ENCODE measurements at regions of chr4 and their contacts with region 1.

Region 1: DNA sequence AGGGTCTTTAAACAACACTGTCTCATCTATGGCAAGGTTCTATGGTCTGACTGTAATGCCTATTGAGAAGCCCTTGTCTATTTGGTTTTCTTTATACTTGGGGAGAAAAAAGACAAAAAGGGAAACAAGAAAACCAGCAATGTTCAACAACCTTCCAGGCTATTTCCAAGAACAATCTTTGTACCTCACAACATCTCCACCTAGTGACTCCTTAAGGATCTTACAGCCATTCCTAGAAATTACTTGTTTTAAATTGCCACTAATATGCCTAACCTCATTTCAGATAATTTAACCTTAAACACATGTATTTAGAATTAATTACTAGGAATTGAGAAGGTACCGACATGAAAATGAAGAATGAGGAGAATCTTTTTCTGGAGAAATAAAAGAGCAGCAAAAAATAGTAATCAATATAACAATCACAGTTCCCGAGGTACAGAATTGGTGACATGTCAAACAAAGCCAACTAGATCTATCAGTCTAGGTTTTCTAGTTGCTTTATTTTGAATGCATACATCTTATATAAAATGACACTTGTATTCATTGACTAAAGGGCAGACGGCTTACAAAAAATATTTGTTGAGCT is 1.6 kb upstream of the RBM46 start:
- DNase-seq: no peak
- H3K4me3 ChIP-seq: no peak overlapping the region
- H3K27ac ChIP-seq: no peak overlapping the region
- H3K4me1 ChIP-seq: peaks cover 0 to 16% (median 14%) of the 10 kb centered on the region in 4 donors
- H3K27me3 ChIP-seq: peaks cover 0 to 12% (median 0%) of the 10 kb centered on the region in 3 donors
- CTCF ChIP-seq: peak in 3 of 4 experiments; percentile 49 to 67 (median 52)
- EP300 ChIP-seq: no peak
- POLR2A ChIP-seq: no peak

Region 2: GRCh38 chr4:154551872-154552686 is 227.4 kb before region 1 on chr4:
- intact Hi-C with region 1: loop called (anchors 2 kb)
- DNase-seq: peak; percentile 88
- H3K4me3 ChIP-seq: no peak overlapping the region
- H3K27ac ChIP-seq: peak overlapping the region; percentile 5 to 88 (median 86)
- H3K4me1 ChIP-seq: peaks cover 0 to 31% (median 20%) of the 10 kb centered on the region in 4 donors
- H3K27me3 ChIP-seq: no peaks in the 10 kb centered on the region
- CTCF ChIP-seq: peak; percentile 24 to 80 (median 70)
- EP300 ChIP-seq: no peak
- POLR2A ChIP-seq: no peak

Region 3: DNA sequence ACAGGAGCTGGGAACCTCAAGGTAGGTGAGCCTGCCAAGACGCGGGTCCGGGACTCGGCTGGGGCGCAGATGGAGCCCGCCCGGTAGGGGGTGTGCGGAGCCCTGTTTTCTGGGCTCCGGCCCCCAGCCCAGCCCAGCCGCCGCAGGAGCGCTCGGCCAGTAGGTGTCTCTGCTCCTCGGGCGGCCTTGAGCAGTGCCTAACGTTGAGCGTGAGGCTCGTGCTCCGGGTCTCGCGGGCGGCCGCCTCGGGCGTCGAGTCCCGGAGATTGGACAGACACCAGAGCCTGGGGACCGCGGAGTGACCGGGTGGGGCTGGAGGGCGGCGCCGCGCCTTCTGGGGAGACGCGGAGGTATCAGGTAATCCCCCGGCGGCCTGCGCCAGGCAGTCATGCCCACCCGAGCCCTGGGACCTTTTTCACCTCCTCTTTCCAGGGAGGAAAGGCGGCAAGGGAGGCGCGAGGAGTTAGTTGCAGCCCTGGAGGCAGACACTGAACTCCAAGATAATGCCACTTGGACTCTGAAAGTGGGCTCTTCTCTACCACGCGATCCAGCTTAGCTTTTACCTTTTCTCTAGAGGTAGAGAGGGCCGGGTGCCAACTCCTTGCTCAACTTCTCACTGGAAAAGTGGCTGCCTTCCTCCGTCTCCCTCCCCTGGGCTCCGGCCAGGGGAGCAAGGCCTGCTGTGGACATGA is 152.5 kb before region 1 on chr4:
- intact Hi-C with region 1: loop called (anchors 2 kb)
- DNase-seq: peak; percentile 76
- H3K4me3 ChIP-seq: peak overlapping the region; percentile 8 to 48 (median 39)
- H3K27ac ChIP-seq: peak overlapping the region in 3 of 4 donors; percentile 6 to 41 (median 40)
- H3K4me1 ChIP-seq: peaks cover 0 to 16% (median 15%) of the 10 kb centered on the region in 4 donors
- H3K27me3 ChIP-seq: peaks cover 0 to 4% (median 0%) of the 10 kb centered on the region in 3 donors
- CTCF ChIP-seq: peak in 3 of 4 experiments; percentile 37 to 62 (median 40)
- EP300 ChIP-seq: no peak
- POLR2A ChIP-seq: no peak